GM10248 (cell line): ENCODE measurements at regions of chr12 and their contacts with region 1.

Region 1: GRCh38 chr12:109855377-109855776 is 22.2 kb upstream of the TRPV4 start:
- DNase-seq: no peak
- CTCF ChIP-seq: no peak

Region 2: GRCh38 chr12:109779382-109779781 is 76.0 kb before region 1 on chr12:
- CTCF ChIA-PET with region 1: no interaction called
- POLR2A ChIA-PET with region 1: no interaction called
- DNase-seq: no peak
- CTCF ChIP-seq: no peak

Region 3: GRCh38 chr12:109880016-109880931 is 24.9 kb after region 1 on chr12 and contains the start of gene GLTP:
- CTCF ChIA-PET with region 1: interaction called, 31 read pairs
- POLR2A ChIA-PET with region 1: no interaction called
- DNase-seq: peak; percentile 98
- CTCF ChIP-seq: peak; percentile 93

Region 4: DNA sequence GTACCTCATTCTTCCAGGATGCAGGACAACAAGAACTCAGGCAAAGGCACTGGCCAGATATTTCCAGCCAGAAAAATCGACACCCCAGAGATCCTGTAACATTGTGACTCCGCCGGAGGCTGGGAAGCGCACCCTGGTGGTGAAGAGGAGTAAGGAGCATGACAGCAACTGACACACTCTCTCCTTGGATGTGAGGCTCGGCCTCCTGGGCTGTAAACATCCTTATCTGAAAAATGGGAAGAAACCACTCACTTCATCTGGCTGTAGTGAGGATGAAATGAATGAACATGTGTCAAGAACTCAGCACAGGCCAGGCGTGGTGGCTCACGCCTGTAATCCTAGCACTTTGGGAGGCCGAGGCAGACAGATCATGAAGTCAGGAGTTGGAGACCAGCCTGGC is 72.2 kb after region 1 on chr12:
- CTCF ChIA-PET with region 1: interaction called, 22 read pairs
- POLR2A ChIA-PET with region 1: no interaction called
- DNase-seq: peak; percentile 71
- CTCF ChIP-seq: peak; percentile 40

Region 5: GRCh38 chr12:110023059-110023606 is 167.8 kb after region 1 on chr12:
- CTCF ChIA-PET with region 1: no interaction called
- POLR2A ChIA-PET with region 1: no interaction called
- DNase-seq: no peak
- CTCF ChIP-seq: no peak